ENCODE measurements at regions of chr1 and their contacts with region 1.

Region 1: GRCh38 chr1:181189691-181190363 is 101.3 kb downstream of the IER5 start:
- DNase-seq: peak; percentile 70
- ATAC-seq: peak; percentile 87

Region 2: DNA sequence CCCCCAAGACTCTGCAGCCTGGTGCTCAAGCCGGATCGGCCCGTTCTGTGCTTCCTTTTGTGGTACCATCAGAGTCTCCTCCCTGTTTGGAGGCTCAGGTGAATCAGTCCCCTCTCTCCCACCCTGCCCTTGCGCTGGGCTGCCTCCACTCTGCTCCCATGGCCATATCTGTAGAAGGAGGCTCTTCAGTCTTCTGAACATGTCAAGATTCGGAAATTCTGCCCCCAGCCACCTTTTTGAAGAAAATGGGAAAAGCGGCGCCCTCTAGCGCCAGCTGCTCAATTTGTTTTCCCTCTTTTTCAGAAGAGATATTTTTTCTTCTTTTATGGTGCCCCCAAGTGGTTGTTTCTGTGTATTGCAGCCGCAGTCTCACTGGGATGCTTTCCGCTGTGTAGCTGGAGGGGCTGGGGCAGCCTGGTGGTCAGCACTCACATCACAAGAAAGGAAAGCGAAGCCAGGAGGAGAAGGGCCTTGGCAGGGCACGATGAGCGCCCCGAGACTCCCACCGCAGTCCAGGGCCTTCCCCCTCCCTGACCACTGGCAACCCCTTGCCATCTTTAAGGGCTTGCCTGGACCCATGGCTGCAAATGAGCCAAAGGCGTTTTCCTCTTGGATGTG is 235.1 kb after region 1 on chr1:
- intact Hi-C with region 1: loop called (anchors 5 kb)
- DNase-seq: peak; percentile 81
- ATAC-seq: peak; percentile 47

Region 3: DNA sequence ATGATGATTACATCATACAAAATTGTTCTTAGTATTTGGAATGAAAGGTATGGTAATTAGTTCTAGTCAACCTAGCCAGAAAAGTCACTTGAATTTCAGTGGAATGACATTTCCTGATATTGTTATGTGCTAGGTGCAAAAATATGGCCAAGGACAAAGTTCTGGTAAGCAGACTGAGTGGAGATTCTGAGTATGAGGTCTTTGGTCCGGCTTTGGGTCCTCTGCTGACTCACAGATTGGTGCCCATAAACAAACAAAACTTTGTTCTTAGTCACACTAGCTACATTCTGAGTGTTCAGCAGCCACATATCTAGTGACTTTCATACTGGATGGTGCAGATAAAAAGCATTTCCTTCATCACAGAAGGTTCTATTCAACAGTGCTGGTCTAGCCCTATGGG is 665.6 kb after region 1 on chr1:
- intact Hi-C with region 1: no loop called
- DNase-seq: no peak
- ATAC-seq: no peak

Measured in sciatic nerve (tissue), 2 donors.